ENCODE measurements at regions of chr5 and their contacts with region 1.

Region 1: DNA sequence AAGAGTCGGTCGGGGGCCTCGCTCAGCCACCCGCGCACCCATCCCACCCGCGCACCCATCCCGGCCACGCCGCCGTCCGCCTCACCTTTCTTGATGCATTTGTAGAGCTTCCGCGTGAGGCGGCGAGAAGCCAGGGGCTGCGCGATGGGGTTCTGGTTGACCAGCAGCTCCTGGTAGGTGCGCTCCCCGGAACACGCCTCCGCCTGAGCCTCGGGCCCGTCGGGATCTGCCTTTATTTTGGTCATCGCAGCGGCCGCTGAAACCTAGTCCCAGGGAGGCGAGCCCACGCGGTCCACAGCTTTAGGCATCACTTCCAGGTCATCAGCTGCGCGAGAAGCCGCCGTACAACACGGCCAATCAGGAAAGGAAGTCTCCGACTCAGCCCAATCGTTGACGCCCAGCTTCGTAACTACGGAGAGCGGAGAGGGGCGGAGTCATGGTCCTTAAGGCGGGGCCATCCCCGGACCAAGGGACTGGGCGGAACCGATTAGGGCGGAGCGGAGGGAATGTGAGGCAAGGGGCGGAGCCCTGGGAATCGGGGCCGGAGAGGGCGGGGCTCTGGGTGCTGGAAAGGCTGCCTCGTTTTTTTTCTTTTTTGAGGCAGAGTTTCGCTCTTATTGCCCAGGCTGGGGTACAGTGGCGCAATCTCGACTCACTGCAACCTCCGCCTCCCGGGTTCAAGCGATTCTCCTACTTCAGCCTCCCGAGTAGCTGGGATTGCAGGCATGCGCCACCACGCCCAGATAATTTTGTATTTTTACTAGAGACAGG is at the start of gene NHP2:
- DNase-seq: peak; percentile 97 to 98 (median 98)
- ATAC-seq: peak; percentile 98
- H3K4me3 ChIP-seq: peak within 1 kb of the TSS; percentile 62
- H3K27ac ChIP-seq: peak within 1 kb of the TSS; percentile 46
- H3K4me1 ChIP-seq: peaks cover 9 to 26% of the 10 kb centered on the region in 2 experiments; a peak in 4 of 5 replicates
- H3K27me3 ChIP-seq: no peaks in the 10 kb centered on the region
- CTCF ChIP-seq: no peak
- EP300 ChIP-seq: no peak; the same call in 1 of the 2 replicates
- POLR2A ChIP-seq: peak; percentile 84
- RAD21 ChIP-seq: no peak
- polyA plus RNA-seq, gene NHP2: 52.8 to 124 TPM

Region 2: DNA sequence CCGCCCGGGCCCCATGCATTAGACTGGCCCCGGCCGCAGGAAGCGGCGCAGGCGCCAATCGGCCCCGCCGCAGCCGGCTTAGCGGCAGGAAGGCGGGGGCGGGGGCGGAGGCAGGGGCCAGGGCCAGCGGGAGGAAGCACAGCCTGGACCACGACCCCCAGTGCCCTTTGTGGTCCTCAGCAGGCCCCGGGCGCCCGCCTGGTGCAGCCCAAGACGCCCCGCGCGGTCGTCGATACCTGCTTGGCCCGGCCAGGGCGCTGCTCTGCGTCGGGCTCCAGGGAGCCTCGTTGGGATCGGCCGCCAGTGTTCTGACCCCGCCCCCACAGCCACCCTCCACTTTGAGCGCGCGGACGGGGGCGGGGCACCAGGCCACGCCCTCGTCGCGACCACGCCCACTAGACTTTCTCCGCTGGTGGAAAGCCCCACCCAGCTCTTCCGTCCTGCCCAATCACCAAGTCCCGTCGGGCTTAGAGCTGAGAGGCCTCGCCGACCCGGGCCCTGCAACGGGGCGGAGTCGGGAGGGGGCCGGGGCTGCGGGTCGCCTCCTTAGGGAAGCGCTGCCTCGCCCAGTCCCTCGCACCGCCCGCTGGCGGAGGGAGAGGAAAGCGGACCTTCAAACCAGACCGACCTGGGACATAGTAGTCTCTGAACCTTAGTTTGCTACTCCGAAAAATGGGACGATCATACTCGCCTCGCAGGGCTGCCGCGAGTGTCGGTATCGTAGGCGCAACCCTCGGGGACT is 656.3 kb before region 1 on chr5 and contains the start of gene PDLIM7:
- CTCF ChIA-PET with region 1: no interaction called
- POLR2A ChIA-PET with region 1: no interaction called
- in situ Hi-C with region 1: no loop called
- intact Hi-C with region 1: no loop called
- DNase-seq: peak; percentile 97 to 99 (median 98)
- ATAC-seq: peak; percentile 81
- H3K4me3 ChIP-seq: peak within 1 kb of the TSS; percentile 82
- H3K27ac ChIP-seq: peak within 1 kb of the TSS; percentile 95
- H3K4me1 ChIP-seq: peaks cover 57 to 85% of the 10 kb centered on the region in 2 experiments
- H3K27me3 ChIP-seq: no peaks in the 10 kb centered on the region
- CTCF ChIP-seq: peak; percentile 31 to 37 (median 35); a peak in 2 of 6 replicates
- EP300 ChIP-seq: no peak; the same call in none of the 2 replicates
- POLR2A ChIP-seq: peak; percentile 97
- RAD21 ChIP-seq: 0 out of 4 replicates have a peak, but pooled peaks of 1 of the 2 experiments have one; percentile 2
- polyA plus RNA-seq, gene PDLIM7: 2.1 to 4.1 TPM

Region 3: GRCh38 chr5:178113199-178113787 is 40.5 kb before region 1 on chr5 and contains the start of gene N4BP3:
- CTCF ChIA-PET with region 1: no interaction called
- POLR2A ChIA-PET with region 1: interaction called, 3 read pairs
- in situ Hi-C with region 1: no loop called
- intact Hi-C with region 1: loop called (anchors 5 kb)
- DNase-seq: peak; percentile 90 to 98 (median 97)
- ATAC-seq: peak; percentile 92
- H3K4me3 ChIP-seq: peak within 1 kb of the TSS; percentile 66
- H3K27ac ChIP-seq: peak within 1 kb of the TSS; percentile 60
- H3K4me1 ChIP-seq: peaks cover 31 to 48% of the 10 kb centered on the region in 2 experiments; a peak in 4 of 5 replicates
- H3K27me3 ChIP-seq: no peaks in the 10 kb centered on the region
- CTCF ChIP-seq: peak; percentile 19 to 61 (median 34); a peak in 4 of 6 replicates
- EP300 ChIP-seq: 0 out of 2 replicates have a peak, but pooled peaks have one; percentile 43
- POLR2A ChIP-seq: peak; percentile 42; the same call in 1 of the 2 replicates
- RAD21 ChIP-seq: peak in 1 of 2 experiments; percentile 18; a peak in 2 of 4 replicates
- polyA plus RNA-seq, gene N4BP3: 0.06 to 0.10 TPM

Region 4: DNA sequence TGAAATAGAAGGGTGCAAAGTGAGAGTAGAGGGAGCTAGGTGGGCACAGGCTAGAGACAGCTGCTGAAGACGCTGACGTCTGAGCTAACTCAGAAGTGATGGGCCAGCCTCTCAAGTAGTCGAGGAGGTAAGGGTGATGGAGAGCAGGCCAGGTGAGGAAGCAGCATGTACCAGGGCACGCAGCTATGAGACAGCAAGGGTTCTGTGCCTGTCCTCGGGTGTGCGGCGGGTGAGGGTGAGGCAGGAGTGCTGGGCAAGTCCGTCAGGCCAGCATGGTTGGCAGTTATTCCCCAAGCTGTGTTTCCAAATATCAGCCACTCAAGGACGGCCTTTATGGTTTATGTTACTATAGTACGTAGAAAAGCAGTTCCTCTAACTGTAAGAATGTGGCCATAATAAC is 16.8 kb before region 1 on chr5:
- CTCF ChIA-PET with region 1: no interaction called
- POLR2A ChIA-PET with region 1: interaction called, 13 read pairs
- in situ Hi-C with region 1: no loop called
- intact Hi-C with region 1: no loop called
- DNase-seq: no peak
- ATAC-seq: peak; percentile 16; the same call in 1 of the 3 replicates
- H3K4me3 ChIP-seq: no peak overlapping the region
- H3K27ac ChIP-seq: no peak overlapping the region; the same call in 2 of the 3 replicates
- H3K4me1 ChIP-seq: peaks cover 0 to 6% of the 10 kb centered on the region in 2 experiments; a peak in 3 of 5 replicates
- H3K27me3 ChIP-seq: no peaks in the 10 kb centered on the region
- CTCF ChIP-seq: no peak
- EP300 ChIP-seq: no peak
- POLR2A ChIP-seq: 0 out of 2 replicates have a peak, but pooled peaks have one; percentile 33
- RAD21 ChIP-seq: no peak

Measured in K562 (cell line).